AG04449 (cell line): ENCODE measurements at regions of chr17 and their contacts with region 1.

Region 1: GRCh38 chr17:39244600-39245570 is 19.1 kb upstream of the STAC2 start:
- DNase-seq: no peak
- H3K4me3 ChIP-seq: no peak overlapping the region
- CTCF ChIP-seq: peak; percentile 90

Region 2: DNA sequence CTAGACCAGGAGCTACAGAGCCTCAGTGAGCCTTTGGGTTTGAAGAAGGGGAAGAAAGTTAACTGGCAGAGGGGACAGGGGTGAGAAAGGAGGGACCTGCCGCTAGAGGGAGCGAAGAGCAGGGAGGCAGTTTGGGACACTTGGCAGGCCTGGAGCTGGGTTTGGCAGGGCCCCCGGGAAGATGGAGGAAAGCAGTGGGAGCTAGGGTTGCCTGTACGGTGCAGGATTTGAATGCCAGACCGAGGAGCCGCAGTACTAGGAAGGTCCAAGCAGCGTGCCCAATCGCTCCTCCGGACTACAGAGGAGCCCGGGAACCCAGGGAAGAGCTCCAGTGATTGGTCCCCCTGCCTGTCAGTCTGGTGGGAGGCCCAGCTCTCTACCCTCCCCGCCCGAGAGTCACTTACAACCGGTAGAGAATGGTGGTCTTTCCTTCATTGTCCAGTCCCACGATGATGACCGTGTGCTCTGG is 80.2 kb before region 1 on chr17:
- CTCF ChIA-PET with region 1: interaction called, 56 read pairs
- POLR2A ChIA-PET with region 1: no interaction called
- DNase-seq: no peak
- H3K4me3 ChIP-seq: peak overlapping the region; percentile 55
- CTCF ChIP-seq: peak; percentile 93

Region 3: GRCh38 chr17:39194089-39194984 is 50.5 kb before region 1 on chr17:
- CTCF ChIA-PET with region 1: interaction called, 429 read pairs
- POLR2A ChIA-PET with region 1: interaction called, 5 read pairs
- DNase-seq: no peak
- H3K4me3 ChIP-seq: peak overlapping the region; percentile 18; the same call in 1 of the 2 replicates
- CTCF ChIP-seq: peak; percentile 73

Region 4: DNA sequence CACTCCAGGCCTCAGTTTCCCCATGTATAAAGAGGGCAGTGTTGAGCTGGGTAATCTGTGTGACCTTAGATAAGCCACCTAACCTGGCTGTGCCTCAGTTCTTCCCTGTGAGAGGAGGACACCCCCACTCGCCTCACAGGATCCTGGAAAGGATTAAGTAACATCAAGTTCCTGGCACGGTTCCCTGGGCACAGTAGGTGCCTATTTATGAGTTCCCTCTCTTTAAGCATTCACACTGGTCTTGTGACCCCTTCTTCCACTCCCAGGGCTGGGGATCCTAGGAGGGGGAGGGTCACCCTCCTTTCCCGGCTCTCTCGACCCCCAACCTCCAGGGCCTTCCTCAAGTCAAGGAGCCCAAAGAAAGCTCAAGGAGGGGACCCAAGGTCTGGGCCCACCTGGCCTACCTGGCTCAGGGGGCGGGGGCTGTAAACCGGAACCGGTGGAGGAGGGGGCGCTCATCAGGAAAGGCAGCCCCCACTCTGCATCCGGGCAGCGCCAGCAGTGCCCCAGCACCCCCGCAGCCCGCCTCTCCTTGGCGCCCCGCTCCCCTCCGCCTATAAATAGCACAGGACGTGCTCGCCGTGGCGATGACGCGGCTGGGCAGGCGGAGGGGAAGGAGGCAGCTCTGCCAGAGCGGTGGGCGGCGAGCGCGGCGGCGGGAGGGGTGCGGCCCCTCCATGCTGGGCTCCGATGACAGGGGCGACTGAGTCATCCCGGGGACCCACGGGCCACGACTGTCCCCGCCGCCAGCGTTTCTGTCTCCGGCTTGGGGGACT is 35.4 kb before region 1 on chr17:
- CTCF ChIA-PET with region 1: interaction called, 429 read pairs
- POLR2A ChIA-PET with region 1: interaction called, 18 read pairs
- DNase-seq: no peak
- H3K4me3 ChIP-seq: peak overlapping the region; percentile 51
- CTCF ChIP-seq: no peak

Region 5: GRCh38 chr17:39261286-39261685 is 16.4 kb after region 1 on chr17:
- CTCF ChIA-PET with region 1: interaction called, 82 read pairs
- POLR2A ChIA-PET with region 1: no interaction called
- DNase-seq: no peak
- H3K4me3 ChIP-seq: no peak overlapping the region
- CTCF ChIP-seq: no peak